ENCODE measurements at regions of chr12 and their contacts with region 1.

Region 1: DNA sequence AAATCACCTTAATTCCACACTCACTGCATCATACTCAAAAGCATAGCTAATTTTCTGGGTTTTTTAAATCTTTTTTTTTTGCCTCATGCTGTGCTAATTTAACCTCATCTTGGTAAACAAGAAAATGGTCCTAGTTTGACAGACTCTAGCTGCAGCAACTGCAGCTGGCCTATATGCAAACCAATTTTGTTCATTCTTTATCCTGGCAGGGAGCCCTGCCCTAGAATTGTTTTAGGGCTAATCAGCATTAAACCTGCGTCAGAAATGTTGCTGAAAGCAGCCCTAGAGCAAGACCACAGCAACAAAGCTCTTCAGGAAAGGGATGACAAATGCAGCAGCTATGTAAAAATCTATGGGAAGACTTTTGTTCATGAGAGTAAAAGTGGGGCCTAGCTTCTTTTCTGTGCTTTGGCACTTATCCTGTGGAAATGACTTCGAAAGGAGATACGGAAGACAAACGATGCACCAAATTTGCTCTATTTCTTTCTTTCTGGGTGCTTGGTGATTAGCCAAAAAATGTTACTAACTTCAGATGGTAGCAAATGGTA is 72.2 kb downstream of the DENND5B start:
- DNase-seq: peak; percentile 98
- H3K4me3 Mint-ChIP-seq: peak overlapping the region; percentile 50
- H3K27ac Mint-ChIP-seq: peak overlapping the region; percentile 87
- H3K4me1 Mint-ChIP-seq: peaks cover 40% of the 10 kb centered on the region
- H3K27me3 Mint-ChIP-seq: no peaks in the 10 kb centered on the region
- CTCF ChIP-seq: no peak

Region 2: DNA sequence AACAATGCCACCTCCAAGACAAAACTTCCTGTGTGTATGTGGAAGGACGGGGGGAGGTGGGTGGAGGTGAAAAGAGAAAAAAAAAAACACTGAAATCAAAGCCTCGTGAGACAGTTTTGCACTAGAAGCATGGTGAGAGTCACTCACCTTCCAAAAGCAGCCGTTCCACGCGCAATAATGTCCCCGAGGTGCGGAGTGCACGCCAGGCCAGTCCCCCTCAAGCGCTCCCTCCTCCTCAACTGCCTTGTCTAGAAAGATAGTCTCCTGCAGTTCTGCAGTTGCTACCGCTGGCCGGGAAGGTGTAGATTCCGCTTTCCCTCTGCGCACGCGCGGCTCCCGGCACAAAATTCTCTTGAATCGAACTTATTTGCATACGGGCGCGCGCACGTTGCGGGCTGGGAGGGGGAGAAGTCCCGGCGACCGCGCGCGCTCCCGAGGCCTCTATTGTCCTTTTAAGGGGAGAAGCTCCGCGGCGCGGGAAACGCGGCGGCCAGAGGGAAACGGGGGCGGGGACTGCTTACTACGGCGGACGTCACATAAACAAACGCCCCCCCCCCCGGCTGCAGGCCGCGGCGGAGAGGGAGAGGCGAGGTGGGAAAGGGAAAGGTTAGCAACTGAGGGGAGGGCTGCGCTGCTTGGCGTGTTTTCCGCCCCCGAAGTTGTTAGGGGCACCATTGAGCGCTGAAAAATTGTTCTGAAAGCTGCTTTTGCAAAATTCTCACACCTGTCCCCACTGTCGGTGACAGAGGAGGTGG is 192.7 kb before region 1 on chr12 and contains the start of gene SINHCAF:
- CTCF ChIA-PET with region 1: no interaction called
- POLR2A ChIA-PET with region 1: interaction called, 12 read pairs
- intact Hi-C with region 1: no loop called
- DNase-seq: peak; percentile 100
- H3K4me3 Mint-ChIP-seq: peak within 1 kb of the TSS; percentile 99
- H3K27ac Mint-ChIP-seq: peak within 1 kb of the TSS; percentile 94
- H3K4me1 Mint-ChIP-seq: peaks cover 14% of the 10 kb centered on the region
- H3K27me3 Mint-ChIP-seq: no peaks in the 10 kb centered on the region
- CTCF ChIP-seq: no peak
- total RNA-seq, gene SINHCAF: 100 and 139 TPM in 2 replicates

Region 3: DNA sequence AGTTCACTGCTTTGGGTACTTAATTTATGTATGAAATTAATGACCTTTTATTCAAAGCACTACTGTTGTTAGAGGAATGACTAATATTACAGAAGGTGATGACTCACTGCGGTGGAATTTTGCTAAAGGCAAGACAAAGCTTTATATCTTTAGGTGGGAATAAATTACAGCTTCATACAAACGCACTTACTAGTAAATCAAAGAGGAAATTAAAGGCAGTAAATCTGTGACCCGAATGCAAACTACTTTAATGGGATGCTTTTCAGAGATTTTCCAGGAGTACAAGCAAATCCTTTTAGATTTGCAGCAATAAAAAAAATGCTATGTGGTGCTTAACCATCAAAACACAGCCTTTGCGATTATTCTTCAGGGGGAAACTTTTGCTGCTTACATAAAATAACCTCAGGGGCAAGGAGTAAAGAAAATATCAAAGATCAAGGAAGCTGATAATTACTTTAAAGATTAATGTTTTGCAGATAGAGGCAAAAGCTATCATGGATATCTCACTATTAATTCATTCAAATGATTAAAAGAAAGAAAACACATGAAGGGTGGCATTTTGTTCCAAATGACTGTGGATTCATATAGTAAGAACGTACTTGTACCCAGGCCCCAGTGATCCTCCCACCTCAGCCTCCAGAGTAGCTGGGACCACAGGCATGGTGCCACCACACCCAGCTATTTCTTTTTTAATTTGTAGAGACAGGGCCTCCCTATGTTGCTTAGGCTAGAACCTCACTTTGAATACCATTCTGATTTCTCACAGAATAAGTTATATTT is 26.7 kb before region 1 on chr12:
- CTCF ChIA-PET with region 1: no interaction called
- POLR2A ChIA-PET with region 1: interaction called, 64 read pairs
- intact Hi-C with region 1: no loop called
- DNase-seq: peak; percentile 89
- H3K4me3 Mint-ChIP-seq: peak overlapping the region; percentile 53
- H3K27ac Mint-ChIP-seq: peak overlapping the region; percentile 67
- H3K4me1 Mint-ChIP-seq: peaks cover 38% of the 10 kb centered on the region
- H3K27me3 Mint-ChIP-seq: no peaks in the 10 kb centered on the region
- CTCF ChIP-seq: no peak

Region 4: DNA sequence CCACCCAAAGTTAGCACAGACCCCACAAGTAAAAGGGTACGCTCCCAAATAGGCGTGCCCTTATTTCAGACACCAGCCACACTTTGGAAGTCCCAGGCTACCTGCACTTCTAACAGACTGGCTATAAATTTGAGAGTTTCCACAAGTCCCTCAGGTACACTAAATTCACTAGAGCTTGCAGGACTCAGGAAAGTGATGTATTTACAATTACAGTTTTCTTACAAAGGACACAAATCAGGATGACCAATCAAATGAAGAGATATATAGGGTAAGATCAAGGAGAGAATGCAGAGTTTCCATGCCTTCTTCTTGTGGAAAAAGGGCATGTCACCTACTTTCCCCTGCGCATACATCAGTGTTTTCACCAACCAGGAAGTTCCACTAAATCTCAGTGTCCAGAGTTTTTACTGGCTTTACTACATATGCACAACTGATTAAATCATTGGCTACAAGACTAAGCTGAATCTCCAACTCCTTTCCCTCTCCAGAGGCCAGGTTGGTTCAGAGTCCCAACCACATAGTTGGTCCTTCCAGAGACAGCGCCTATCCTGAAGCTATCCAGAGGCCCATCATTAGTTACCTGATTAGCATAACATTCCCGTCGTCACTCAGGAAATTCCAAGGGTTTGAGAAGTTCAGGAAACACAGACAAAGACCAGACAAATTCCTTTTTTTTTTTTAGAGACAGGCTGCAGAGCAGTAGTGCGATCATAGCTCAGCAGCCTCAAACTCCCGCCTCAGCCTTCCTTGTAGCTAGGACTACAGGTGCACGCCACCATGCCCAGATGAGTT is 12.0 kb before region 1 on chr12:
- CTCF ChIA-PET with region 1: interaction called, 4 read pairs
- POLR2A ChIA-PET with region 1: interaction called, 99 read pairs
- intact Hi-C with region 1: no loop called
- DNase-seq: no peak
- H3K4me3 Mint-ChIP-seq: no peak overlapping the region
- H3K27ac Mint-ChIP-seq: peak overlapping the region; percentile 21
- H3K4me1 Mint-ChIP-seq: peaks cover 25% of the 10 kb centered on the region
- H3K27me3 Mint-ChIP-seq: no peaks in the 10 kb centered on the region
- CTCF ChIP-seq: no peak

Region 5: GRCh38 chr12:31568498-31568897 is 49.7 kb after region 1 on chr12:
- CTCF ChIA-PET with region 1: interaction called, 7 read pairs
- POLR2A ChIA-PET with region 1: interaction called, 34 read pairs
- intact Hi-C with region 1: no loop called
- DNase-seq: no peak
- H3K4me3 Mint-ChIP-seq: no peak overlapping the region
- H3K27ac Mint-ChIP-seq: no peak overlapping the region
- H3K4me1 Mint-ChIP-seq: peaks cover 12% of the 10 kb centered on the region
- H3K27me3 Mint-ChIP-seq: no peaks in the 10 kb centered on the region
- CTCF ChIP-seq: no peak

Region 6: DNA sequence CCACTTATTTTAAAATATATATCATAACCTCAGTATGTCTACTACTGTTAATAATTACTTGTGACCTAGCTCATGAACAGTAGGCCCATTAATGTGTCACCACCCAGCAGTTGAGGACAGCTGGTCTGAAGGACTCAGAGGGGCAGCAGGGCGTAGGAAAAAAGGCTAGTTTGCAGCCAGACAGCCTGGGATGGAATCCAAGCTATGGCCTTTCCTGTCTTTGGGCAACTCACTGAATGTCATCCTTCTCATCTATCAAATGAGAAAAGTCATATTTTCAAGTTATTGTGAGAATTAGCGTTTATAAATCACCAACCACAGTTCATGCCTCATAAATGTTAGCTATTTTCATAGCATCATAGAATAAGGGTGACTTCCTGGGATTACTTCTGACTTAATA is 59.9 kb after region 1 on chr12:
- CTCF ChIA-PET with region 1: interaction called, 6 read pairs
- POLR2A ChIA-PET with region 1: interaction called, 34 read pairs
- intact Hi-C with region 1: no loop called
- DNase-seq: no peak
- H3K4me3 Mint-ChIP-seq: no peak overlapping the region
- H3K27ac Mint-ChIP-seq: no peak overlapping the region
- H3K4me1 Mint-ChIP-seq: peaks cover 13% of the 10 kb centered on the region
- H3K27me3 Mint-ChIP-seq: no peaks in the 10 kb centered on the region
- CTCF ChIP-seq: no peak

Region 7: GRCh38 chr12:31603546-31604009 is 84.8 kb after region 1 on chr12:
- CTCF ChIA-PET with region 1: no interaction called
- POLR2A ChIA-PET with region 1: no interaction called
- intact Hi-C with region 1: no loop called
- DNase-seq: no peak
- H3K4me3 Mint-ChIP-seq: no peak overlapping the region
- H3K27ac Mint-ChIP-seq: no peak overlapping the region
- H3K4me1 Mint-ChIP-seq: no peaks in the 10 kb centered on the region
- H3K27me3 Mint-ChIP-seq: no peaks in the 10 kb centered on the region
- CTCF ChIP-seq: no peak

Measured in MCF 10A (cell line).